ENCODE measurements at regions of chr7 and their contacts with region 1.

Region 1: DNA sequence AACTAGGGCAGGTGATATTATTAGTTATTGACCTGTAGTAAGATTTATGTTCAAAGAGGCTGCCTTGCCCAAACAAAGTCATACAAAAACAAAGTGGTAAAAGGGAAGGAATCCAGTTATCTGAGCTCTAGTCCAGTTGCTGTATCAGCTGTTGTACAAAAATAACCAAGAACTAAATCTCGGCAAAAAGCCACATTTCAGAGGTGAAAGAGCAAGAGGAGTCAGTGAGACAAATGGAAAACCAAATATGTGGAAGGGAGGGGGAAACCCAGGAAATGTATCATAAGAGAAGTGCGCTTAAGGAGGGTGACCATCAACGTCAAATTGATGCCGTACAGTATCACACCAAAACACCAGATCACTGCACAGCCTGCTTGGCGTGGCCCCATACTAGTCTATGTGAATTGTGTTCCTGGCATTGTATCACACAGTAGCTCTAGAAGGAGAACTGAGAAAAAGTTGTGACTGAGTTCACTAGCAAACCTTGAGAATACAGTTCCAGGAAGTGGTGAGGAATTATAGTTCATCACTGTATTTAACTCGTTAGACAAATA is 6.4 kb downstream of the AGBL3 start:
- DNase-seq: no peak
- H3K4me3 ChIP-seq: no peak overlapping the region; the same call in 1 of the 2 replicates
- H3K4me3 Mint-ChIP-seq: peak overlapping the region; percentile 45
- H3K27ac Mint-ChIP-seq: peak overlapping the region; percentile 86
- H3K4me1 ChIP-seq: peaks cover 73% of the 10 kb centered on the region
- H3K4me1 Mint-ChIP-seq: peaks cover 46% of the 10 kb centered on the region
- H3K27me3 ChIP-seq: no peaks in the 10 kb centered on the region
- H3K27me3 Mint-ChIP-seq: no peaks in the 10 kb centered on the region
- CTCF ChIP-seq: no peak

Region 2: DNA sequence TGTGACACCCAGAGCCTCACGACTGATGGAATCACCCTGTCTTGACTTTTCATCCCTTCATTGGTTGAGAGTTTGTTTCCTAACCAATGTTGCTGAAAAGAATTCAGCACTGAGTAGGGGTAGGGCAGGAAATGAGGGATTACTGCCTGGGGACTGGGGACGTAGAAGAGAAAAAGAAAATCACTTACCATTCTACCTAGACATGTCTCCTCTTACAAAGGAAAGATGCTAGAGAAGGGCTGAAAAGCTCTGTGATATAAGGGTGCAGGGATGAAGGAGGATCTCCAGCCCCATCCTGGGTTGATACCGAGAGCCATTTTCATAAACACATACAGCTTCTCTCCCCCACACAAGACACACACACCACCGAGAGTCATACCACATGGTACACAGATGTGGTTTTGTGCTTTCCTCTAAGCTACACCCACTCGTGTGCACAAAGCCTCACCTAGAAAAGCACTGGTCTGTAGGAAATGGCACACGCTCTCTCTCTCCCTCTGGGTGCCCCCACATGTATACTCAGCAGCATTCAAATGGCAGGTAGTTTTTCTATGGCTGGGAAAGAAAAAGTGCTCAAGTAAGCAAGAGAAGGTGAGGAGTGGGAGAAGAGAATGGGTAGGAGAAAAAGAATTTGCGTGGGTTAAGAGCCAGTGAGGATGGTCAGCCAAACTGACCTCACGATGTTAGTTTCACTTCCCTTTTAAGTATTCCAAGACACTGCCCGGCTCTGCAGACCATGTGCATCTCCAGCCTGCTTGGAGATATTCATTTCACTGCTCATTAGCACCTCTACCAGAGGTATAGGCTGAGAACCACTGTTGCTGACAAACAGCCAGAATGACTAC is 127.5 kb before region 1 on chr7:
- CTCF ChIA-PET with region 1: no interaction called
- POLR2A ChIA-PET with region 1: no interaction called
- intact Hi-C with region 1: no loop called
- DNase-seq: no peak
- H3K4me3 ChIP-seq: no peak overlapping the region
- H3K4me3 Mint-ChIP-seq: no peak overlapping the region
- H3K27ac Mint-ChIP-seq: no peak overlapping the region
- H3K4me1 ChIP-seq: no peaks in the 10 kb centered on the region
- H3K4me1 Mint-ChIP-seq: no peaks in the 10 kb centered on the region
- H3K27me3 ChIP-seq: no peaks in the 10 kb centered on the region
- H3K27me3 Mint-ChIP-seq: no peaks in the 10 kb centered on the region
- CTCF ChIP-seq: no peak

Region 3: GRCh38 chr7:135095229-135095849 is 102.6 kb after region 1 on chr7:
- CTCF ChIA-PET with region 1: no interaction called
- POLR2A ChIA-PET with region 1: no interaction called
- intact Hi-C with region 1: loop called (anchors 1 kb)
- DNase-seq: peak in 1 of 2 experiments; percentile 49
- H3K4me3 ChIP-seq: no peak overlapping the region
- H3K4me3 Mint-ChIP-seq: peak overlapping the region; percentile 10
- H3K27ac Mint-ChIP-seq: no peak overlapping the region
- H3K4me1 ChIP-seq: peaks cover 51% of the 10 kb centered on the region
- H3K4me1 Mint-ChIP-seq: peaks cover 32% of the 10 kb centered on the region
- H3K27me3 ChIP-seq: no peaks in the 10 kb centered on the region
- H3K27me3 Mint-ChIP-seq: no peaks in the 10 kb centered on the region
- CTCF ChIP-seq: no peak

Region 4: DNA sequence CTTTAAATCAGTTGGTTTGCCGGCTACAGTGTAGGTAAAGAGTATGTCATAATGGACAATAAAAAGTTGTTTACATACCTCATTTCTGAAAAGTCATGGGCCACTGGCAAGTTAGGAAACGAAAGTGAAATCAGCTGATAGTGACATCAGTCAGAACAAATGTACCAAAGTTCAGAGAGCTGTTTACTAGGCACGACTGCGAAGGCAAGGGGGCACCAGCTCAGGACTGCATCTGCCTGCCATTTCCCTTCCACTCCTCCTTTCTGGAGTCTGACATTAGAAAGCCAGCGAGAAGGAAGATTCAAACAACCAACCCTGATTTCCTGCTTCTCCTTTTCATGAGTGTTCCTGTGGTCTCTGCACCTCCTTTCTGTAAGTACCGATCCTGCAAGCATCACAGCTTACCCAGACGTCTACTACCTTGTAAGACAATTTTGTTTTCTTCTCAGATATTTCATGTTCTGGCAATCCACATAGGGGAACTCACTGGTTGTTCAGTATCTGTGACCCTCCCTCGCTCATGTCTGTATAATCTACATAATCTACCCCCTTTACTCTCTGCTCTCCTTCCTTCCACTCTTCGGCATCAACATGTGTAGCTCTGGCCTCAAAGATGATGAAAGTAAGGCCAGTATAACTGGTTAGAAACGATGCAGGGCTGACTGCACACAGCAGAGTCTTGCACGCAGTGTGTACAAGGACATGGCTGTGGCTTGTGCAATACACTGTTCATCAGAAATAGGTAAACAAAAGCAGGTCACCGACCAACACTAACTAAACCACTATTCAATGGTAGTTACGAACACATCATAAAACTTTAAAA is 155.4 kb after region 1 on chr7 and contains the start of gene TMEM140:
- CTCF ChIA-PET with region 1: no interaction called
- POLR2A ChIA-PET with region 1: interaction called, 4 read pairs
- intact Hi-C with region 1: loop called (anchors 1 kb)
- DNase-seq: peak; percentile 63 to 74
- H3K4me3 ChIP-seq: peak within 1 kb of the TSS; percentile 33
- H3K4me3 Mint-ChIP-seq: peak within 1 kb of the TSS; percentile 79
- H3K27ac Mint-ChIP-seq: peak within 1 kb of the TSS; percentile 86
- H3K4me1 ChIP-seq: peaks cover 14% of the 10 kb centered on the region
- H3K4me1 Mint-ChIP-seq: peaks cover 21% of the 10 kb centered on the region
- H3K27me3 ChIP-seq: no peaks in the 10 kb centered on the region
- H3K27me3 Mint-ChIP-seq: no peaks in the 10 kb centered on the region
- CTCF ChIP-seq: no peak
- total RNA-seq, gene TMEM140: 3.8 and 6.1 TPM in 2 replicates

Region 5: DNA sequence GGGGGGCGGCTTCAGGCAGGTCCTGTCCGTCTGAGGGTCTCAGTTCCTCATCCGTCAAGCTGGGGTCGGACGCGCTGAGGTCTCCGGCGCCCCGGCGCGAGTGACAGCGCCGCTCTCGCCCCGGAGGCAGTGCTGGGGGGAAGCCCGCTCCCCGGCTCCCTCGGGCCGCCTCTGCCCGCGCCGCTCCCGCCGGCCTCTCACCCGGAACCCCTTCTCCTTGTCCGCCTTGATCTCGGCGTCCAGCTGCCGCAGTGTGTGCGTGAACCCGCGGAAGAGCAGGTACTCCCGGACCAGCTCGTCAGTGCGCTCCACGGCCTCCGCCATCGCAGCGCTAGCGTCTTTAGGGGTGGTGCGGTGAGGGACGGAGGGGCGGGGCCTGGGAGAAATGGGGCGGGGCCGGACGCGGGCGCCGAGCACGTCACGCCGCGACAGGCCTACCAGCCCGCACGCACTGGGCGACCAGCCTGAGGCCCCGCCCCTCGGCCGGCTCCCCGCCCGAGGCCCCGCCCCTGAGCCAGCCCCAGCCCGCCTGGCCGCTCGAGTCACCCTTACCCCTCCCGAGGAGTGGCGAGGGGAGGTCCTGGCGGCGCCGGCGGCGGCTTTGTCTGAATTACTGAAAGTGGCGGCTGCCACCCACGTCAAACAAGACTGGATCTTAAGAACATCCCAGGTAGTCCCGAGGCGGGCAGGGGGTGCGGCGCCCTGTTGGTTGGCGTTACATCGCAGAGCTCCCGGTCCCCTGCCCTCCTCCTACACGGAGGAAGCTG is 218.7 kb after region 1 on chr7 and contains the start of gene WDR91:
- CTCF ChIA-PET with region 1: no interaction called
- POLR2A ChIA-PET with region 1: no interaction called
- intact Hi-C with region 1: loop called (anchors 5 kb)
- DNase-seq: peak; percentile 94 to 95
- H3K4me3 ChIP-seq: peak within 1 kb of the TSS; percentile 86
- H3K4me3 Mint-ChIP-seq: peak within 1 kb of the TSS; percentile 95
- H3K27ac Mint-ChIP-seq: peak within 1 kb of the TSS; percentile 96
- H3K4me1 ChIP-seq: peaks cover 4% of the 10 kb centered on the region; the same call in 1 of the 2 replicates
- H3K4me1 Mint-ChIP-seq: peaks cover 9% of the 10 kb centered on the region
- H3K27me3 ChIP-seq: no peaks in the 10 kb centered on the region
- H3K27me3 Mint-ChIP-seq: no peaks in the 10 kb centered on the region
- CTCF ChIP-seq: no peak
- total RNA-seq, gene WDR91: 11.5 and 12.6 TPM in 2 replicates